ENCODE measurements at regions of chr10 and their contacts with region 1.

Region 1: DNA sequence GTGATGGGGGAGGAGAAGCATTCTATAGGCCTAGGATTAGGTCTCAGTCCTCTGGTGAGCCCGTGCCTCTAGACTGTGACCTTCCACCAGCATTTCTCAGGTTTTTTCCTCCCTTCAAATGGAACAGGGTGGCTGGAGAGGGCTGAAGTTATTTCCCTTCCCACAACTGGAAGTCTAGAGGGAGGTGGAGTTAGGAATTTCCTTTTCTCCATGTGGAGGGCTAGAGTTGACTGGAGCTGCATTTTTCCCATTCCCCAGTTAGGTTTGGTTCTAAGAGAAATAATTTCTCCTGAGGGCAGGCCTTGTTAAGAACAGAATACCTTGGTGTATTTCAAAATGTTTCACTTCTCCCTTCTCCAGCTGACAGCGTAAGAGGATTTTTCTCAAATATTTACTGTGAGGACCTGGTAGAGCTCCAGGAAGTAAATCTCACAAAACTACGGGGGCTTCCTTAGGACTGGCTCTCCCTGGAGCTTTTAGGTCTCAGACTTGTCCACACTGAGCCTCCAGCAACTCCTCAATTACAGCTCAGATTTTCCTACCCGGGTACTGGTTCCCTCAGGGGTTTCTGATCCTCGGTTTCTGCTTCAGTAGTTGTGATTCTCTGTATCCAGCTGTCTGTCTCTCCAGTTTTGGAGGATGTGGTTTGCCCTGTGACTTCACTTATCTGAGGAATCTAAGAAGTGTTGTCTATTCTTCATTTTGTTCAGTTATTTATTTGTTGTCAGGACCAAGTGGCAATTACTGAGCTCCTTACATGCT is 6.0 kb upstream of the REEP3 start:
- DNase-seq: peak in 4 of 14 experiments; percentile 4 to 52 (median 24)
- ATAC-seq: peak; percentile 51
- H3K4me3 ChIP-seq: no peak overlapping the region
- H3K4me3 Mint-ChIP-seq: peak overlapping the region; percentile 34
- H3K27ac ChIP-seq: no peak overlapping the region
- H3K27ac Mint-ChIP-seq: peak overlapping the region; percentile 8
- H3K4me1 ChIP-seq: peaks cover 6% of the 10 kb centered on the region
- H3K4me1 Mint-ChIP-seq: peaks cover 83% of the 10 kb centered on the region
- H3K27me3 ChIP-seq: no peaks in the 10 kb centered on the region
- H3K27me3 Mint-ChIP-seq: no peaks in the 10 kb centered on the region
- CTCF ChIP-seq: no peak

Region 2: GRCh38 chr10:63206997-63207811 is 308.0 kb before region 1 on chr10:
- CTCF ChIA-PET with region 1: no interaction called
- POLR2A ChIA-PET with region 1: no interaction called
- intact Hi-C with region 1: loop called in 1 of 2 experiments (anchors 5 kb)
- DNase-seq: peak in 3 of 14 experiments; percentile 18 to 40 (median 27)
- ATAC-seq: no peak
- H3K4me3 ChIP-seq: no peak overlapping the region
- H3K4me3 Mint-ChIP-seq: peak overlapping the region; percentile 40
- H3K27ac ChIP-seq: no peak overlapping the region
- H3K27ac Mint-ChIP-seq: peak overlapping the region; percentile 31
- H3K4me1 ChIP-seq: peaks cover 12% of the 10 kb centered on the region
- H3K4me1 Mint-ChIP-seq: peaks cover 63% of the 10 kb centered on the region
- H3K27me3 ChIP-seq: no peaks in the 10 kb centered on the region
- H3K27me3 Mint-ChIP-seq: no peaks in the 10 kb centered on the region
- CTCF ChIP-seq: no peak

Region 3: DNA sequence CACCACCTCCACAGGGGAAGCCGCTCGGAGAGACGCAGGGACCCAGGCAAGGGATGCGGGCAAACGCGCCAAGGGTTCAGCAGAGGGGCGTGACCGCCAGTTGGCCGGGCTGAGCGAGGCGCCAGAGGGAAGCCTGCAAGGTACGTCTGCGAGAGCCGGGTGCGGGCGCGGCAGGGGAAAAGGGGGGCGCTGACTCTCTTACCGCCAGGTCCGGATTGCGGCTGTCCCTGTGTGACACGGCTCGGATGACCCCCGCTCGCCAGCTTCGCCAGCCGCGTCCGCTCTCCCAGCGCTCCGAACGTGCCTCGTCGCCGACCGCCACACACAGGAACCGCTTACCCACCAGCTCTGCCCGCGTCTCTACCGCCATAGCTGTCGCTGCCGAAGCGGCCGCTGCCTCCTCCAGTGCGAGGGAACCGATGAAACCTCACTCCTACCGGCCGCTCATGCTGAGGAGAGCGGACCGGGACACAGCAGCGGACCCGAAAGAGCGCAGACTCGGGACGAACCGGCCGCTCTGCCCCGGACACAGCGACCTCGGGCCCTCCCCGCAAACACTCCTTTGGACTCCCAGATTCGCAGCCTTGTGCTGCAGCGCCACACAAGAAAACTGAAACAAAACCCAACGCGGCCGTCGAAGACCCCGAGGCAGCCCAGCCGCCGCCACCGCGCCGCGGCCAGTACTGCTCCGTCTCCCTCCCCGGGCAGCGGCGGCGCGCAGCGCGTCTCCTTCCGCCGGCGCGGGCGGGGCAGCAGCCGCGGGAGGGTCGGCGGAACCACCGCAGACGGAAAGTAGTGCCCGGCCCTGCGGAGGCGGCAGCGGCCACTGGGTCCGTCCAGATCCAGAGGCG is 49.7 kb before region 1 on chr10 and contains the start of gene JMJD1C:
- CTCF ChIA-PET with region 1: no interaction called
- POLR2A ChIA-PET with region 1: interaction called, 4 read pairs
- intact Hi-C with region 1: loop called in 1 of 2 experiments (anchors 5 kb)
- DNase-seq: peak; percentile 37 to 81 (median 52)
- ATAC-seq: peak; percentile 64
- H3K4me3 ChIP-seq: peak within 1 kb of the TSS; percentile 91
- H3K4me3 Mint-ChIP-seq: peak within 1 kb of the TSS; percentile 97
- H3K27ac ChIP-seq: peak within 1 kb of the TSS; percentile 49 to 57
- H3K27ac Mint-ChIP-seq: peak within 1 kb of the TSS; percentile 85
- H3K4me1 ChIP-seq: peaks cover 6% of the 10 kb centered on the region
- H3K4me1 Mint-ChIP-seq: peaks cover 67% of the 10 kb centered on the region
- H3K27me3 ChIP-seq: no peaks in the 10 kb centered on the region
- H3K27me3 Mint-ChIP-seq: no peaks in the 10 kb centered on the region
- CTCF ChIP-seq: no peak
- total RNA-seq, gene JMJD1C: 389 to 399 TPM

Region 4: GRCh38 chr10:63554657-63555056 is 39.5 kb after region 1 on chr10:
- CTCF ChIA-PET with region 1: no interaction called
- POLR2A ChIA-PET with region 1: no interaction called
- intact Hi-C with region 1: loop called in 1 of 2 experiments (anchors 5 kb)
- DNase-seq: peak in 11 of 14 experiments; percentile 2 to 63 (median 25)
- ATAC-seq: peak; percentile 96
- H3K4me3 ChIP-seq: no peak overlapping the region
- H3K4me3 Mint-ChIP-seq: peak overlapping the region; percentile 26
- H3K27ac ChIP-seq: peak overlapping the region in 1 of 2 donors; percentile 8
- H3K27ac Mint-ChIP-seq: peak overlapping the region; percentile 39
- H3K4me1 ChIP-seq: peaks cover 3% of the 10 kb centered on the region
- H3K4me1 Mint-ChIP-seq: peaks cover 29% of the 10 kb centered on the region
- H3K27me3 ChIP-seq: no peaks in the 10 kb centered on the region
- H3K27me3 Mint-ChIP-seq: no peaks in the 10 kb centered on the region
- CTCF ChIP-seq: no peak

Measured in CD4-positive, alpha-beta T cell (primary cell).